Activated CD4-positive, alpha-beta memory T cell treated with anti-CD3 and anti-CD28 coated beads for 36 hours (primary cell): ENCODE measurements at regions of chr7 and their contacts with region 1.

Region 1: DNA sequence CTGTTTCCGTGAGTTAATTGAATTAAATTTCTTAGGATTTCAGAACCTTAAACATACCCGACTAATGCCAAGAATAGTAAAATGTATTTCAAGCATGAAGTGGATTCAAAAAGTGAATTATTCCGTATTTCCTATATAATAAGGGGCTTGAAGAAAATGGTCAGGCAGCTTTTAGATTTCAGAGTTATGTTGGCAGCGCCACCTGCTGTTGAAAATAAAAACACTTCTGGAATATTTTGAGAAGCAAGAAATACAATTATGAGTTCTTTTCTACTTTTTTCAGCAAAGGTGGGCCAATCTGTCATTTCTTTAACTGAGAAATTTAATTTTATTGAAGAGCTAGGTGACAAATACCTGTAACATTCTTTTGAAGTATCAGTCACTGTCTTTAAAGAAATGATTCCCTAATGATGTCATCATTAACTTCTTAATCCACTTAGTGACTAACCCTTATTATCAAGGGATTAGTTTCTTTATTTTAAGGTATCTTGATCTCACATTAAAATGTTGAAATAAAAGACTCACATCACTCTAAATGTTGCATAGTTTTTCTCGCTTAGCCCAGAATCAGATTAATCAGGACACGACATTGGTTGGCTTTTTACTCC is 36.6 kb upstream of the AGR3 start:
- DNase-seq: no peak
- H3K4me3 Mint-ChIP-seq: no peak overlapping the region
- H3K27ac Mint-ChIP-seq: no peak overlapping the region
- H3K4me1 Mint-ChIP-seq: peaks cover 7% of the 10 kb centered on the region
- H3K27me3 Mint-ChIP-seq: no peaks in the 10 kb centered on the region

Region 2: GRCh38 chr7:16431646-16432424 is 486.6 kb before region 1 on chr7:
- CTCF ChIA-PET with region 1: interaction called, 3 read pairs
- POLR2A ChIA-PET with region 1: no interaction called
- intact Hi-C with region 1: loop called (anchors 5 kb)
- DNase-seq: peak; percentile 18
- H3K4me3 Mint-ChIP-seq: no peak overlapping the region
- H3K27ac Mint-ChIP-seq: no peak overlapping the region
- H3K4me1 Mint-ChIP-seq: no peaks in the 10 kb centered on the region
- H3K27me3 Mint-ChIP-seq: no peaks in the 10 kb centered on the region

Region 3: DNA sequence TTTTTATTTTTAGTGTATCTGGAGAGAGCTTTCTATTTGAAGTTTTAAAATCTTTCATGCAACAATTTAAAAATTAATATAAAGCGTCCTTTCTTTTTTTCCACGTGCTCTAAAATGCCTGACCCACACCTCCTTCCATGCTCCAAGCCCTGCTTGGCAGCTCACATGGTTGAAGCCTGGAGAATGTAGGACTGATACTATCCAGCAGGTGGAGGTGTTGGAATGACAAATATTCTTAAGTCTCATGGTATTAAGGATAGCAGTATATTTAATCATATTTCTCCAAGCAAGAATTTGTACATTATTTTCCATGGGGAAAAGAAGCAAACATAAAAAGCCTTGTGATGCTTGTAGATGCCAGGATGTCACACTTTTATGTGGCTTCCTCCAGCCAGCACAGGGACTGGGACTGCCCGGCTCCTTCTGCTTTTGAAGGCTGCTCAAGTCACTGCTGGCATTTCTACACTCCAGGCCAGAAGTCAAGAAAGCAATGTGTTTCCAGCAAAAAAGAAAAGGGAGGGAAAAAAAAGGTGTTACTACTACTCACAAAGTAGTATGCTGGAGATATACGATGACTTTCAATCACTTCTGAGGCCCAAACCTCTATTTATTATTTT is 222.7 kb before region 1 on chr7:
- CTCF ChIA-PET with region 1: interaction called, 8 read pairs
- POLR2A ChIA-PET with region 1: no interaction called
- intact Hi-C with region 1: loop called (anchors 1 kb)
- DNase-seq: no peak
- H3K4me3 Mint-ChIP-seq: no peak overlapping the region
- H3K27ac Mint-ChIP-seq: no peak overlapping the region
- H3K4me1 Mint-ChIP-seq: no peaks in the 10 kb centered on the region
- H3K27me3 Mint-ChIP-seq: no peaks in the 10 kb centered on the region

Region 4: GRCh38 chr7:16891338-16891737 is 27.1 kb before region 1 on chr7:
- CTCF ChIA-PET with region 1: interaction called, 30 read pairs
- POLR2A ChIA-PET with region 1: no interaction called
- intact Hi-C with region 1: loop called (anchors 1 kb)
- DNase-seq: no peak
- H3K4me3 Mint-ChIP-seq: no peak overlapping the region
- H3K27ac Mint-ChIP-seq: no peak overlapping the region
- H3K4me1 Mint-ChIP-seq: peaks cover 19% of the 10 kb centered on the region
- H3K27me3 Mint-ChIP-seq: no peaks in the 10 kb centered on the region